Caco-2 (cell line): ENCODE measurements at regions of chr19 and their contacts with region 1.

Region 1: DNA sequence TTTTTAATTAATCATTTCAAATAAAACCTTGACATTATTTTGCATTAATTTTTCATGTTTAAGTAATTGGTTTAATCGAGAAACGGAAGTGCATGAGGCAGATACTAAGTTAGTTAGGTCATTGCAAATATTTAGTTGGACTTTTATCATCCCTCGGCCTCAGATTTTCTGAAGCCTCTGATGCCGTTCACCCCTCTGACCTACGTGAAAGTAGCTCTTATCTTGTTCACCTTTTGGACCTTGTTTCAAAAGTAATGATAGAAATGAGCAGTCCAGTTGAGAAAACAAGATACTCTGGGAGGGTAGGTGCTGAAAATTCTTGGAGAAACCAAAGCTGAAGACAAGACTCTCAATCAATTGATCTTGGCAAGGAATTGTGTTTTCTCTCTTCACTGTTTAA is 23.0 kb downstream of the LAIR2 start:
- DNase-seq: no peak
- H3K4me3 ChIP-seq: no peak overlapping the region
- H3K4me3 Mint-ChIP-seq: no peak overlapping the region
- H3K27ac Mint-ChIP-seq: no peak overlapping the region
- H3K4me1 ChIP-seq: peaks cover 7% of the 10 kb centered on the region; the same call in 1 of the 2 replicates
- H3K4me1 Mint-ChIP-seq: no peaks in the 10 kb centered on the region
- H3K27me3 ChIP-seq: no peaks in the 10 kb centered on the region; the same call in 1 of the 2 replicates
- H3K27me3 Mint-ChIP-seq: peaks cover 17% of the 10 kb centered on the region
- CTCF ChIP-seq: no peak

Region 2: GRCh38 chr19:55566823-55567222 is 1041.2 kb after region 1 on chr19:
- CTCF ChIA-PET with region 1: interaction called, 10 read pairs
- POLR2A ChIA-PET with region 1: no interaction called
- intact Hi-C with region 1: no loop called
- DNase-seq: no peak
- H3K4me3 ChIP-seq: no peak overlapping the region
- H3K4me3 Mint-ChIP-seq: no peak overlapping the region
- H3K27ac Mint-ChIP-seq: no peak overlapping the region
- H3K4me1 ChIP-seq: 0 out of 2 replicates have a peak, but pooled peaks cover 3% of the 10 kb centered on the region
- H3K4me1 Mint-ChIP-seq: no peaks in the 10 kb centered on the region
- H3K27me3 ChIP-seq: no peaks in the 10 kb centered on the region
- H3K27me3 Mint-ChIP-seq: no peaks in the 10 kb centered on the region
- CTCF ChIP-seq: no peak